ENCODE measurements at regions of chr9 and their contacts with region 1.

Region 1: DNA sequence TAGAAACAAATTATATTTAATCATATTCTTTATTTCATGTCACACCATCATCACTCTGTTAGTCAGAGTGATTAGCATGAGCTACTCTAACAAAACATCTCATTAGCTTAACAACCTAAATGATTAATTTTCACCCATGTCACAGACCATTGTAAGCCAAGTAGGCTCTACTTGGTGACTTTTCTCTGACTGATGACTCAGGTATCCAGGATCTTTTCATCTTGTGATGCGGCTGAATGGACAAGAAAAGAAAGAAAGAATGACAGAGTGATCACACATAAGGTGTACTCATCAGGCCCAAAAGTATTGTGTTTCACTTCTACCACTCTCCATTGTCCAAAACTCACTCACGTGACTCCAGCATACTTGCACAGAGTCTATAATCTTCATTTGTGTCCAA is 299.3 kb downstream of the ANXA1 start:
- DNase-seq: no peak
- ATAC-seq: no peak
- H3K4me3 ChIP-seq: no peak overlapping the region
- H3K4me3 Mint-ChIP-seq: no peak overlapping the region
- H3K27ac ChIP-seq: no peak overlapping the region
- H3K27ac Mint-ChIP-seq: no peak overlapping the region
- H3K4me1 ChIP-seq: no peaks in the 10 kb centered on the region
- H3K4me1 Mint-ChIP-seq: no peaks in the 10 kb centered on the region
- H3K27me3 ChIP-seq: no peaks in the 10 kb centered on the region
- H3K27me3 Mint-ChIP-seq: no peaks in the 10 kb centered on the region
- CTCF ChIP-seq: no peak

Region 2: GRCh38 chr9:73437758-73438157 is 13.2 kb before region 1 on chr9:
- CTCF ChIA-PET with region 1: no interaction called
- POLR2A ChIA-PET with region 1: no interaction called
- intact Hi-C with region 1: no loop called
- DNase-seq: peak in 1 of 14 experiments; percentile 8
- ATAC-seq: no peak
- H3K4me3 ChIP-seq: no peak overlapping the region
- H3K4me3 Mint-ChIP-seq: no peak overlapping the region
- H3K27ac ChIP-seq: no peak overlapping the region
- H3K27ac Mint-ChIP-seq: no peak overlapping the region
- H3K4me1 ChIP-seq: no peaks in the 10 kb centered on the region
- H3K4me1 Mint-ChIP-seq: no peaks in the 10 kb centered on the region
- H3K27me3 ChIP-seq: no peaks in the 10 kb centered on the region
- H3K27me3 Mint-ChIP-seq: no peaks in the 10 kb centered on the region
- CTCF ChIP-seq: no peak

Region 3: GRCh38 chr9:74479711-74480110 is 1028.7 kb after region 1 on chr9:
- CTCF ChIA-PET with region 1: no interaction called
- POLR2A ChIA-PET with region 1: no interaction called
- intact Hi-C with region 1: loop called in 1 of 2 experiments (anchors 10 kb)
- DNase-seq: no peak
- ATAC-seq: no peak
- H3K4me3 ChIP-seq: no peak overlapping the region
- H3K4me3 Mint-ChIP-seq: no peak overlapping the region
- H3K27ac ChIP-seq: no peak overlapping the region
- H3K27ac Mint-ChIP-seq: no peak overlapping the region
- H3K4me1 ChIP-seq: no peaks in the 10 kb centered on the region
- H3K4me1 Mint-ChIP-seq: no peaks in the 10 kb centered on the region
- H3K27me3 ChIP-seq: no peaks in the 10 kb centered on the region
- H3K27me3 Mint-ChIP-seq: no peaks in the 10 kb centered on the region
- CTCF ChIP-seq: no peak

Measured in CD4-positive, alpha-beta T cell (primary cell).